Left colon (tissue), 2 donors: ENCODE measurements at regions of chr3 and their contacts with region 1.

Region 1: GRCh38 chr3:122679085-122679881 is 1.4 kb upstream of the PARP14 start:
- DNase-seq: peak; percentile 77 to 89
- ATAC-seq: peak; percentile 61

Region 2: DNA sequence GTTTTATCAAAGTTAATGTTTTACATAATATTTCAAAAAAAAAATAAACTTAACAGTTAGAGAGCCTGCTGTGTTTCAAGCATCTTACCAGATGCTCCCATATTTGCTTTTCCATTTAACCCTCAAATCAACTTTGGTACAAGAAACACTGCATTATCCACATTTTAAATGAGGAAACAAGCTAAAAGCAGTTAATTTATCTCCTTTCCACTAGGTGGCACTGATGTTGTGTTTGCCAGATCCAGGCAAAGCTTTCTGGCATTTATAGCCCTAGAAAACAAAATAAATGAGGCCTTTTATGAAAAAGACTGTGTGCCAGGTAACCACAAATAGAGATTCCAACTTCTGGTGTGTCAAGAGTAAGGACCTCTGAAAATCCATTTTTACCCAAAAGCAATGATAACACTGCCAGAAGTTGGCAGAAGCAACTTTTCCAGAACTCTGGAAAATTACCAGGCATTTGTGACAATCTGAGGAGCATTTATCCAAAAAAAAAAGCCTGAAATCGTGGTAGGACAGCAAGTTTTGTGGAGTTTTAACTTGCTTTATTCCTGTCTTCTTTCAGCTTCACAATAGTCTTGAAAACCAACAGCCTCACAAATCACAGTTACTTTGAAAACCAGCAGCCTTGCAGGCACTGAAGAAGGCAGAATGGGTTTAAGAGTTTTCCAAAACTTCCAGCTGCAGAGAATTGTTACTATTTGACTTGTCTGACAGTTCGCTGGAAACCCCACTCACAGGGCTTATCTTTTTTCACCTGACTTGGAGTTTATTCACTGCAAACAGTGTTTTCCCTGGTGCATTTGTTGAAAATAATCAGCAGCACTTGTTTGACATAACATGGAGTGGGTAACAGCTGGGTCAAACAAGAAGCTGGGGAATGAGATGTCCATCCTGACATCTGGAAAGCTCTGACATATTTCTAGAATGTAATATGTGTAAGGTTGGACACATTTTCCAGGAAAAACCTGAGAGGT is 286.1 kb before region 1 on chr3:
- intact Hi-C with region 1: loop called in 1 of 2 experiments (anchors 10 kb)
- DNase-seq: no peak
- ATAC-seq: peak; percentile 52

Region 3: DNA sequence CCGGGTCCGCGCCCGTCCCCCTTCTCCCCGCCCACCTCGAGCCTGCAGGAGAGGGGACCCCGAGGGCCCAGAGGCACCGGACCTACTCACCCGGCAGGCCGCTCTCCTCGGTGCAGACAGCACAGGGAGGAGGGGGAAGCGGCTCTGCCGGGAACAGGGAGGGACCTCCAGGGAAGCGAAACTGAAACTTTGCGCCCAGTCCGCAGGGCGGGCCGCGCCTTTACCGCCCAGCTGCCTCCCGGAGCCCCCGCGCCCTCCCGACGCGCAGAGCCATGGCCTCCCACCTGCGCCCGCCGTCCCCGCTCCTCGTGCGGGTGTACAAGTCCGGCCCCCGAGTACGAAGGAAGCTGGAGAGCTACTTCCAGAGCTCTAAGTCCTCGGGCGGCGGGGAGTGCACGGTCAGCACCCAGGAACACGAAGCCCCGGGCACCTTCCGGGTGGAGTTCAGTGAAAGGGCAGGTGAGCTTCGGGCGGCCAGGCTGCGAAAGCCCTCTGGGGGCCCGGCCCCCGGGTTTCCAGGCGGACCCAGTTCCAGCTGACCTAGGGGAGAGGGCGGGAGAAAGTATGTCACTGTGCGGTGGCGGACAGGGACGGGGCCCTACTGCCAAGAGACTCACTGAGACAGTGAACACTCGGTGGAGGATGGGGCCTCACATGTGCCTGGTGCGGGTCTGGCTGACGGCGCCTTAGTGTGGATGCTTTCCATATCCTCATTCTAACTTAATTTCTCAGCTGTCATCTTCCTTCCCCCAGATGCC is 114.9 kb before region 1 on chr3 and contains the starts of genes DTX3L and PARP9:
- intact Hi-C with region 1: loop called in 1 of 2 experiments (anchors 5 kb)
- DNase-seq: peak; percentile 88 to 93
- ATAC-seq: peak; percentile 98
- total RNA-seq, gene DTX3L: 43.9 to 60.5 TPM
- total RNA-seq, gene PARP9: 22.4 to 48.2 TPM